Lower leg skin (tissue), 4 donors: ENCODE measurements at regions of chr16 and their contacts with region 1.

Region 1: GRCh38 chr16:82229796-82230619 is 60.0 kb upstream of the MPHOSPH6 start:
- DNase-seq: peak; percentile 62 to 91
- H3K4me3 ChIP-seq: no peak overlapping the region
- CTCF ChIP-seq: peak in 1 of 3 donors; percentile 71
- POLR2A ChIP-seq: no peak

Region 2: GRCh38 chr16:81891736-81892357 is 338.2 kb before region 1 on chr16:
- intact Hi-C with region 1: loop called (anchors 5 kb)
- DNase-seq: no peak
- H3K4me3 ChIP-seq: no peak overlapping the region
- CTCF ChIP-seq: no peak
- POLR2A ChIP-seq: no peak

Region 3: GRCh38 chr16:82031116-82032084 is 198.6 kb before region 1 on chr16:
- intact Hi-C with region 1: loop called (anchors 10 kb)
- DNase-seq: no peak
- H3K4me3 ChIP-seq: no peak overlapping the region
- CTCF ChIP-seq: no peak
- POLR2A ChIP-seq: no peak

Region 4: DNA sequence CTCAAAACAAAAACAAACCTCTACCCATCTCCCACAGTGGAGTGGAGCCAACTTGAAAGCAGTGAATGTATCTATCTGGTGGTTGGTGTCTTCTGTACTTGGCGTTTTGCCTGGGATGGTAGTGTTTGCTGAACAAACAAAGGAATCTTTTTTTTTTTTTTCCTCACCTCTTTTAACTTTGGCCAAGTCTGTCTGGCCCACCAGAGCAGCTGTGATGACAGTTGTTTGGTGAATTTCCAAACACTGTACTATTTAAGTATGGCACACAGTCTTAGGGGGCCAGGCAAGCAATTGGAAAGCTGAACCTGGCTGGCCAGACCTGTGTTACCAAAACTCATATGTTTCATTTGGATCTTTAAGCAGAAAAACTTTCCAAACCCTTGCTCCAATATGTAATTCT is 295.0 kb after region 1 on chr16:
- intact Hi-C with region 1: no loop called
- DNase-seq: no peak
- H3K4me3 ChIP-seq: no peak overlapping the region
- CTCF ChIP-seq: no peak
- POLR2A ChIP-seq: no peak